ENCODE measurements at regions of chr18 and their contacts with region 1.

Region 1: GRCh38 chr18:63031375-63031774 is 288.2 kb downstream of the BCL2 start:
- DNase-seq: no peak
- ATAC-seq: no peak
- H3K4me3 ChIP-seq: no peak overlapping the region
- H3K27ac ChIP-seq: no peak overlapping the region
- H3K4me1 ChIP-seq: no peaks in the 10 kb centered on the region
- H3K27me3 ChIP-seq: no peaks in the 10 kb centered on the region
- CTCF ChIP-seq: no peak
- EP300 ChIP-seq: no peak
- POLR2A ChIP-seq: no peak
- RAD21 ChIP-seq: no peak

Region 2: DNA sequence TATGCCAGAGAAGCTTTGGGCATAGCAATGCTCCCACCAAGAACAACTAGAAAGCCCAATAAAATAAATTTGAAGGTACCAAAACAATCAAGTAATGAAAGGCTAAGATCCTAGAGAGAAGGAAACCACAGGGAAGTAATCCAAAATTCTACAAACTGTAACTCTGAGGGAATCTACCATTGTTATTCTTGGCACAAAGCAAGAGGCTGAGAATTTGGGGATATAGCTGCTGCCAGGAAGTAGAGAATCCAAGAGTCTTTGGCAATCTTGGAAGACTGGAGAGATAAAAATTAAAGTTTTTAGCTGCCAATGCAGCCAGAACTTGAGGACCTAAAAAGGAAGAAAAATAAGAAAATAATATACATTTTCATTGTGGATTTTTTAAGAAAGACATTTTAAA is 913.0 kb before region 1 on chr18:
- CTCF ChIA-PET with region 1: no interaction called
- POLR2A ChIA-PET with region 1: no interaction called
- in situ Hi-C with region 1: no loop called
- intact Hi-C with region 1: loop called (anchors 5 kb)
- DNase-seq: no peak
- ATAC-seq: no peak
- H3K4me3 ChIP-seq: no peak overlapping the region
- H3K27ac ChIP-seq: no peak overlapping the region
- H3K4me1 ChIP-seq: no peaks in the 10 kb centered on the region
- H3K27me3 ChIP-seq: no peaks in the 10 kb centered on the region
- CTCF ChIP-seq: no peak
- EP300 ChIP-seq: no peak
- POLR2A ChIP-seq: no peak
- RAD21 ChIP-seq: no peak

Region 3: DNA sequence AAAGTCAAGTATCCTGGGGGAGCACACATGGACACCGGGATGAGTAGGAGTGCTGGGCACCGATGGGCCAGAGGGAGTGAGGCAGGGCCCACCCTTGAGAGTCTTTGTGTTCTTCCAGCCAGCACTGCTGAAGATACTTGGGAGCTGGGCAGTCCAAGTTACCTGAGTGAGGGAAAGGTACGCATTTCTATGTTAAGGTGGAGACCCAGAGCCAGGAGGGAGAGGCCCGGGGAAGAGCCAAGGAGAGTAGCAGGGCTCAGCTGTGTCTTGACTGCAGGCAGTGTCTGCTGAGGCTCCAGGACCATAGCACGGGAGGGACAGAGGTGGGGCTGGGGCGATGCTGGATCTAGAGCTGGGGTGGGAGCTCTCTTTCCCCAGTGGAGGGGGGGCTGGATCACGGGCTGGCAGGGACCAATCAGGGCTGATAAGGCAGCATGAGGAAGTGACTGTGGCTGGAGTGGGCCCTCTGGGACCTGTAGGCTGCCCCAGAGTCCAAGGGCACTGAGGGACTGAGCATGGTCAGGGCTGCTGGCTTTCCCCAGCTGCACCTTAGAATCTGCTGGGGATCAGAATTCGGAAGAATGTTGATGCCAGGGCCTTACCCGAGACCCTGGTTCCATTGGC is 26.8 kb before region 1 on chr18:
- CTCF ChIA-PET with region 1: no interaction called
- POLR2A ChIA-PET with region 1: no interaction called
- in situ Hi-C with region 1: no loop called
- intact Hi-C with region 1: no loop called
- DNase-seq: no peak
- ATAC-seq: peak; percentile 60
- H3K4me3 ChIP-seq: no peak overlapping the region
- H3K27ac ChIP-seq: no peak overlapping the region
- H3K4me1 ChIP-seq: 0 out of 2 replicates have a peak, but pooled peaks cover 6% of the 10 kb centered on the region
- H3K27me3 ChIP-seq: peaks cover 4 to 19% of the 10 kb centered on the region in 2 experiments; a peak in 3 of 5 replicates
- CTCF ChIP-seq: no peak
- EP300 ChIP-seq: no peak
- POLR2A ChIP-seq: no peak
- RAD21 ChIP-seq: no peak